ENCODE measurements at regions of chr5 and their contacts with region 1.

Region 1: GRCh38 chr5:92222449-92222848 is 839.3 kb upstream of the ARRDC3 start:
- DNase-seq: no peak
- ATAC-seq: no peak
- H3K4me3 ChIP-seq: no peak overlapping the region
- H3K27ac ChIP-seq: no peak overlapping the region
- H3K4me1 ChIP-seq: no peaks in the 10 kb centered on the region
- H3K27me3 ChIP-seq: no peaks in the 10 kb centered on the region
- CTCF ChIP-seq: no peak
- POLR2A ChIP-seq: no peak

Region 2: GRCh38 chr5:91928754-91929521 is 293.5 kb before region 1 on chr5:
- intact Hi-C with region 1: loop called in 2 of 10 experiments (anchors 10 kb)
- DNase-seq: no peak
- ATAC-seq: no peak
- H3K4me3 ChIP-seq: no peak overlapping the region
- H3K27ac ChIP-seq: no peak overlapping the region
- H3K4me1 ChIP-seq: no peaks in the 10 kb centered on the region
- H3K27me3 ChIP-seq: no peaks in the 10 kb centered on the region
- CTCF ChIP-seq: peak in 11 of 12 donors; percentile 30 to 64 (median 48)
- POLR2A ChIP-seq: no peak

Region 3: DNA sequence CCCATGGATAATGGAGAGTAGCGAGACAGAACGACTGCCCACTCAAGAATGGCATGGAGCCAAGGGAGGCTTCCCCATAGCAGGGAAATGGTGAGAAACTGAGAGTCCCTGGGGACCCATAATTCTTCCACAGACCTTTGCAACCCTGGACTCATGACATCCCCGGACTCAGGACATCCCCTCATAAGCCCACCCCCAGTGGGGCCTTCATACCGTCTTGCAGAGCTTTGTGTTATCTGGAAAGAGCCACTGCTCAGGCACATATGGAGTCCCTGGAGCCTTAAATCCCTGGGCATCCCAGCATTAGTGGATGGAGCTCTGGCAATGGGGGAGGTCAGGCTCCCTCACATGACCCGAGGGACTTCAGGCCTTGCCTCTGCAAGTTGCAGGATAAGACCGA is 26.1 kb after region 1 on chr5:
- intact Hi-C with region 1: no loop called
- DNase-seq: no peak
- ATAC-seq: no peak
- H3K4me3 ChIP-seq: no peak overlapping the region
- H3K27ac ChIP-seq: no peak overlapping the region
- H3K4me1 ChIP-seq: no peaks in the 10 kb centered on the region
- H3K27me3 ChIP-seq: no peaks in the 10 kb centered on the region
- CTCF ChIP-seq: no peak
- POLR2A ChIP-seq: no peak

Region 4: GRCh38 chr5:92353107-92354030 is 130.9 kb after region 1 on chr5:
- intact Hi-C with region 1: no loop called
- DNase-seq: no peak
- ATAC-seq: no peak
- H3K4me3 ChIP-seq: no peak overlapping the region
- H3K27ac ChIP-seq: no peak overlapping the region
- H3K4me1 ChIP-seq: no peaks in the 10 kb centered on the region
- H3K27me3 ChIP-seq: no peaks in the 10 kb centered on the region
- CTCF ChIP-seq: no peak
- POLR2A ChIP-seq: no peak